ENCODE measurements at regions of chrX and their contacts with region 1.

Region 1: DNA sequence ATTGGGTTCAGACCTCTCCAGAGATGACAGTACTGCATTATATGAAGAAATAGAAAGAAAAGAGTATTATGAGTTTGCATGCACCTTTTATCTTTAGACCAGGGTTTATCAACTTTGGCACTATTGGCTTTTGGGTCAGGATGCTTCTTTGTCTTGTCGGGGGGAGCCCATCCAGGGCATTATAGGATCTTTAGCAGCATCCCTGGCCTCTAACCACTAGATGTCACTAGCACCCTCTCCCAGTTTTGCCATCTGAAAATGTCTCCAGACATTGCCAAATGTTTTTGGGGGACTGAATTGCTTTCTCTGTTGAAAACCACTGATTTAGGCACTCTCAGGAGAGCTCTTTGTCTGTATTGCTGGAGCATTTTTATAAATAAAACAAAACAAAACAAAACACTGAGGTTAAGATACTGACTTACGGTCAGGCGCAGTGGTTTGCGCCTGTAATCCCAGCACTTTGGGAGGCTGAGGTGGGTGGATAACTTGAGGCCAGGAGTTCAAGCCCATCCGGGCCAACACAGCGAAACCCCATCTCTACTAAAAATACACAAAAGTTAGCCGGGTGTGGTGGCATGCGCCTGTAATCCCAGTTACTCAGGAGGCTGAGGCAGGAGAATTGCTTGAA is 23.6 kb downstream of the CA5B start:
- DNase-seq: peak in 4 of 5 donors; percentile 44 to 56 (median 54)
- H3K4me3 ChIP-seq: no peak overlapping the region
- H3K4me3 Mint-ChIP-seq: peak overlapping the region in 2 of 8 donors; percentile 18 to 59
- H3K27ac ChIP-seq: no peak overlapping the region
- H3K27ac Mint-ChIP-seq: peak overlapping the region; percentile 68 to 92 (median 85)
- H3K4me1 ChIP-seq: peaks cover 45% of the 10 kb centered on the region
- H3K4me1 Mint-ChIP-seq: peaks cover 26 to 76% (median 42%) of the 10 kb centered on the region in 4 donors
- H3K27me3 ChIP-seq: no peaks in the 10 kb centered on the region
- H3K27me3 Mint-ChIP-seq: no peaks in the 10 kb centered on the region

Region 2: GRCh38 chrX:15686818-15687685 is 74.6 kb before region 1 on chrX:
- CTCF ChIA-PET with region 1: interaction called, 8 read pairs
- POLR2A ChIA-PET with region 1: no interaction called
- intact Hi-C with region 1: loop called (anchors 1 kb)
- DNase-seq: peak; percentile 64 to 78 (median 78)
- H3K4me3 ChIP-seq: no peak overlapping the region
- H3K4me3 Mint-ChIP-seq: no peak overlapping the region
- H3K27ac ChIP-seq: no peak overlapping the region
- H3K27ac Mint-ChIP-seq: peak overlapping the region; percentile 30 to 92 (median 66)
- H3K4me1 ChIP-seq: peaks cover 6% of the 10 kb centered on the region
- H3K4me1 Mint-ChIP-seq: peaks cover 7 to 27% (median 13%) of the 10 kb centered on the region in 4 donors
- H3K27me3 ChIP-seq: no peaks in the 10 kb centered on the region
- H3K27me3 Mint-ChIP-seq: no peaks in the 10 kb centered on the region

Region 3: DNA sequence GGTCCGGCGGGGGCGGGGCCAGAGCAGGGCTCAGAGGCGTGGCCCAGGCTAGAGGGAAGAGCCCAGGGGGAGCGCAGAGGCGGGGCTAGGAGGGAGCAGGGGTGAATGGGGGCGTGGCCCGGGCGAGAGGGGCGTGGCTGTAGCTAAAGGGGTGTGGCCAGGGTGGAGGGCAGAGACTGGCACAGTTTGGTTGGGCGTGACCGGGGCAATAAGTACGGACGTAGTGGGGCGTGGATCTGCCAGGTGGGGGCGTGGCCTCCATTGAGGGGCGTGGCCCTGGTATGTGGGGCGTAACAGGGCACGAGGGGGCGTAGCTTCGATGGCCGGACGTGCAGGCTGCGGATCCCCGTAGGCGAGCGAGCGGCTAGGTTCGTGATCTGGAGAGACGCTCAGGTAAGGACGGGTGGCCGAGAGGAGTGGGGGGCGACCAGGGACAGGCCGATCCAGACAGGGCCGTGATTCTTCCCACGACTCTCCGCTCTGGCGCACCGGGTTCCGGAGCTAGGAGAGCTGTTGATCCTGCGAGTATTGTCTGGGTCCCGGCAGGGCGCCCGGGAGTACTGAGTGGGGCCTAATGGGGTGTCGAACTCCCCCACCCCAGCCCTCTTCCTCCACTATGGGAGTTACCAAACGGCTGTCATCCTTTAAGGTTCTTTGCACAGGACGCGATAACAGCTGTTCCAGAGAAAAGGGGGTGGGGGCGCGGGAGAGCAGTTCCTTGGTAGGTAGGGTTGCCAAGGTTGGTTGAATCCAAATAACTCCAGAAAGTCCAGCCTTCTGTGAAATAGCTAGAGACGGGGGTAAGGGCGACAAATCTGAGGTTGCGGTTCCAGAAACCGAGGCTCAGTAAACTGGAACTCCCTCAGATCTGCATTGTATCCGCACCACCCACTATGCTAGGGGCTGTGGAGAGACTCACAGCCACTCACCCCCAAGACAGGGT is 23.4 kb before region 1 on chrX and contains the start of gene CA5B:
- CTCF ChIA-PET with region 1: interaction called, 14 read pairs
- POLR2A ChIA-PET with region 1: interaction called, 58 read pairs
- intact Hi-C with region 1: loop called (anchors 2 kb)
- DNase-seq: peak; percentile 95 to 100 (median 99)
- H3K4me3 ChIP-seq: peak within 1 kb of the TSS; percentile 57 to 81
- H3K4me3 Mint-ChIP-seq: peak within 1 kb of the TSS; percentile 94 to 99 (median 97)
- H3K27ac ChIP-seq: peak within 1 kb of the TSS; percentile 87
- H3K27ac Mint-ChIP-seq: peak within 1 kb of the TSS; percentile 93 to 99 (median 97)
- H3K4me1 ChIP-seq: peaks cover 40% of the 10 kb centered on the region
- H3K4me1 Mint-ChIP-seq: peaks cover 30 to 57% (median 45%) of the 10 kb centered on the region in 4 donors
- H3K27me3 ChIP-seq: no peaks in the 10 kb centered on the region
- H3K27me3 Mint-ChIP-seq: no peaks in the 10 kb centered on the region
- total RNA-seq, gene CA5B: 45.7 to 54.5 TPM

Region 4: DNA sequence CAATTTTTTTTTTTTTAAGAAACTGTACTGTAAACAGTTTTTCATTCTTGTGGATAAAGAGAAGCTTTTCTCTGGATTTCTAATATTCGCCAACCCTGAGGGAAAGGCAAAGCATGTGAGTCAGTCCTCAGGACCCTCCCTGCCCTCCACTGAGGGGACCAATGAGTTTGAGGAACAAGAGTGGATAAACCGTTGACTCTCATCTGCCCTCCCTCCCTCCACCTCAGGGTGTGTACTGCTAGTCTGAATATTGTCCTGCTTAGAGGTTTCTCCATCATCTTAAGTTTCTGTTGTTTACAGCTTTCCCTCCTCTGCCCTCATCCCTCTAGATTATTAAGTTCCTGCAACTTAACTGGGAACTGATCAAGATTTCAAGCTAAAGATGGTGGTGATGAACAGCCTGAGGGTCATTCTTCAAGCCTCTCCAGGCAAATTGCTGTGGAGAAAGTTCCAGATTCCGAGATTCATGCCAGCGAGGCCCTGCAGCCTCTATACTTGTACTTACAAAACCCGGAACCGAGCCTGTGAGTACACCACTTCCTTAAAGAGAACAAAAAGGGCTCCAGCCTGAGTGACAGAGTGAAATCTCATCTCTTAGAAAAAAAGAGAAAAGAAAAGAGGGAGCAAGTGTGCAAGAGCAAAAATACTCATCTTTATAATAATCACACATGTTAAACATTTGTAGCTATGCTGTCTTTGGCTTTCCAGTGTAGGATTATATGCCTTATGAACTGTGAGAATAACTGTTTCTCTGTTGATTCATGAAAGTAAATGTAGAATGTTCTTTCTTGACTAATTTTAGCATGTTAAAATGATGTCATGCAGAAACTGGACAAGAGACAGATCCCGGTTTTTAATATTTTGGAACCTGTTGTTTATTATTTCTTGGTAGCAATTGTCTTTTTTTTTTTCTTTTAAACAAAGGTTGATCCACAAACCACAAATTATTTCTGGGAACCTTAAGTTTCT is 11.8 kb before region 1 on chrX:
- CTCF ChIA-PET with region 1: interaction called, 11 read pairs
- POLR2A ChIA-PET with region 1: interaction called, 7 read pairs
- intact Hi-C with region 1: no loop called
- DNase-seq: peak; percentile 51 to 63 (median 60)
- H3K4me3 ChIP-seq: peak overlapping the region in 1 of 2 donors; percentile 23
- H3K4me3 Mint-ChIP-seq: peak overlapping the region; percentile 77 to 92 (median 84)
- H3K27ac ChIP-seq: peak overlapping the region; percentile 97
- H3K27ac Mint-ChIP-seq: peak overlapping the region; percentile 91 to 100 (median 97)
- H3K4me1 ChIP-seq: peaks cover 74% of the 10 kb centered on the region
- H3K4me1 Mint-ChIP-seq: peaks cover 58 to 96% (median 83%) of the 10 kb centered on the region in 4 donors
- H3K27me3 ChIP-seq: no peaks in the 10 kb centered on the region
- H3K27me3 Mint-ChIP-seq: no peaks in the 10 kb centered on the region

Region 5: GRCh38 chrX:15789979-15790768 is 28.5 kb after region 1 on chrX and contains the start of gene ZRSR2:
- CTCF ChIA-PET with region 1: interaction called, 13 read pairs
- POLR2A ChIA-PET with region 1: interaction called, 13 read pairs
- intact Hi-C with region 1: no loop called
- DNase-seq: peak; percentile 91 to 95 (median 94)
- H3K4me3 ChIP-seq: peak within 1 kb of the TSS; percentile 65 to 76
- H3K4me3 Mint-ChIP-seq: peak within 1 kb of the TSS in 1 of 8 donors; percentile 18
- H3K27ac ChIP-seq: peak within 1 kb of the TSS; percentile 83
- H3K27ac Mint-ChIP-seq: peak within 1 kb of the TSS in 1 of 7 donors; percentile 68
- H3K4me1 ChIP-seq: peaks cover 37% of the 10 kb centered on the region
- H3K4me1 Mint-ChIP-seq: peaks cover 13 to 35% (median 24%) of the 10 kb centered on the region in 4 donors
- H3K27me3 ChIP-seq: no peaks in the 10 kb centered on the region
- H3K27me3 Mint-ChIP-seq: no peaks in the 10 kb centered on the region
- total RNA-seq, gene ZRSR2: 30.1 to 30.7 TPM

Region 6: DNA sequence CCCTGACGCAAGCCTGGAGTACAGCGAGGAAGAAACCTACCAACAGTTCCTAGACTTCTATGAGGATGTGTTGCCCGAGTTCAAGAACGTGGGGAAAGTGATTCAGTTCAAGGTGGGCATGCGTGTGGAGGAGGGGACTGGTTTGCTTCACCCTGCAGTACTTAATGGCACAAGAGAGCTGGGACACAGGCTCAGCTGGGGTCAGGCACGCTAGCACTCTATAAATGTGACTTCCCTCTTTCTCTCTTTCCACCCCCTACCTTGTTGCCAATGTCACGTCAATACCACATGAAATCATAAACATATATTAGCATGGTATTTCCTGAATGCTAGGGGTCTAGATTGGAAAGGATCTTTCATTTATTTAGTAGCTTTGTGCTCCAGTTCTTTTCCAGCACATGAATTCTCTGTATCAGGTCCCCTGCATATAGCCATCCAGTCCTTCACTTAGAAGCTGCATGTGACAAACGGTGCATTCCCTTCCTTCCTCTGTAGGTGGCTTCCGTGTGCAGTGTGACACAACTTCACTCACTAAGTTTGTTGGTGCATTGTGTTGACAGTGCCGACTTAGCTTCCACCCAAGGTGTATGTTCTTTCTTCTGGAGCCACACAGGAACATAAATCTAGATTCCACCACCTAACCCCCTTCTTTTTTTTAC is 54.2 kb after region 1 on chrX:
- CTCF ChIA-PET with region 1: no interaction called
- POLR2A ChIA-PET with region 1: no interaction called
- intact Hi-C with region 1: loop called (anchors 1 kb)
- DNase-seq: peak in 4 of 5 donors; percentile 16 to 26 (median 20)
- H3K4me3 ChIP-seq: no peak overlapping the region
- H3K4me3 Mint-ChIP-seq: peak overlapping the region in 6 of 8 donors; percentile 52 to 73 (median 54)
- H3K27ac ChIP-seq: no peak overlapping the region
- H3K27ac Mint-ChIP-seq: peak overlapping the region; percentile 43 to 92 (median 89)
- H3K4me1 ChIP-seq: peaks cover 33% of the 10 kb centered on the region
- H3K4me1 Mint-ChIP-seq: peaks cover 22 to 36% (median 32%) of the 10 kb centered on the region in 4 donors
- H3K27me3 ChIP-seq: no peaks in the 10 kb centered on the region
- H3K27me3 Mint-ChIP-seq: no peaks in the 10 kb centered on the region

Region 7: GRCh38 chrX:16123222-16123786 is 361.6 kb after region 1 on chrX and contains the start of gene GRPR:
- CTCF ChIA-PET with region 1: no interaction called
- POLR2A ChIA-PET with region 1: no interaction called
- intact Hi-C with region 1: loop called (anchors 2 kb)
- DNase-seq: peak; percentile 43 to 57 (median 43)
- H3K4me3 ChIP-seq: no peak within 1 kb of the TSS
- H3K4me3 Mint-ChIP-seq: peak within 1 kb of the TSS in 3 of 8 donors; percentile 49 to 63 (median 51)
- H3K27ac ChIP-seq: no peak within 1 kb of the TSS
- H3K27ac Mint-ChIP-seq: no peak within 1 kb of the TSS
- H3K4me1 ChIP-seq: no peaks in the 10 kb centered on the region
- H3K4me1 Mint-ChIP-seq: peaks cover 4 to 11% (median 7%) of the 10 kb centered on the region in 4 donors
- H3K27me3 ChIP-seq: no peaks in the 10 kb centered on the region
- H3K27me3 Mint-ChIP-seq: peaks cover 3 to 7% of the 10 kb centered on the region in 2 donors
- total RNA-seq, gene GRPR: 0.23 to 0.33 TPM

Measured in CD4-positive, alpha-beta memory T cell (primary cell).